Heart right ventricle (tissue), 16 donors: ENCODE measurements at regions of chr4 and their contacts with region 1.

Region 1: GRCh38 chr4:38062088-38062893 is 102.1 kb downstream of the PTTG2 start:
- DNase-seq: peak; percentile 74 to 87
- ATAC-seq: peak; percentile 52 to 89 (median 79)
- H3K4me3 ChIP-seq: peak overlapping the region in 8 of 10 donors; percentile 21 to 54 (median 42)
- H3K27ac ChIP-seq: peak overlapping the region in 9 of 10 donors; percentile 18 to 81 (median 75)
- H3K4me1 ChIP-seq: peaks cover 0 to 46% (median 26%) of the 10 kb centered on the region in 9 donors
- H3K27me3 ChIP-seq: no peaks in the 10 kb centered on the region
- CTCF ChIP-seq: peak; percentile 74 to 95 (median 87)

Region 2: GRCh38 chr4:37628977-37629609 is 433.2 kb before region 1 on chr4:
- intact Hi-C with region 1: no loop called
- DNase-seq: no peak
- ATAC-seq: peak in 5 of 8 donors; percentile 37 to 83 (median 43)
- H3K4me3 ChIP-seq: no peak overlapping the region
- H3K27ac ChIP-seq: peak overlapping the region in 1 of 10 donors; percentile 29
- H3K4me1 ChIP-seq: peaks cover 0 to 30% (median 6%) of the 10 kb centered on the region in 9 donors
- H3K27me3 ChIP-seq: no peaks in the 10 kb centered on the region
- CTCF ChIP-seq: no peak

Region 3: DNA sequence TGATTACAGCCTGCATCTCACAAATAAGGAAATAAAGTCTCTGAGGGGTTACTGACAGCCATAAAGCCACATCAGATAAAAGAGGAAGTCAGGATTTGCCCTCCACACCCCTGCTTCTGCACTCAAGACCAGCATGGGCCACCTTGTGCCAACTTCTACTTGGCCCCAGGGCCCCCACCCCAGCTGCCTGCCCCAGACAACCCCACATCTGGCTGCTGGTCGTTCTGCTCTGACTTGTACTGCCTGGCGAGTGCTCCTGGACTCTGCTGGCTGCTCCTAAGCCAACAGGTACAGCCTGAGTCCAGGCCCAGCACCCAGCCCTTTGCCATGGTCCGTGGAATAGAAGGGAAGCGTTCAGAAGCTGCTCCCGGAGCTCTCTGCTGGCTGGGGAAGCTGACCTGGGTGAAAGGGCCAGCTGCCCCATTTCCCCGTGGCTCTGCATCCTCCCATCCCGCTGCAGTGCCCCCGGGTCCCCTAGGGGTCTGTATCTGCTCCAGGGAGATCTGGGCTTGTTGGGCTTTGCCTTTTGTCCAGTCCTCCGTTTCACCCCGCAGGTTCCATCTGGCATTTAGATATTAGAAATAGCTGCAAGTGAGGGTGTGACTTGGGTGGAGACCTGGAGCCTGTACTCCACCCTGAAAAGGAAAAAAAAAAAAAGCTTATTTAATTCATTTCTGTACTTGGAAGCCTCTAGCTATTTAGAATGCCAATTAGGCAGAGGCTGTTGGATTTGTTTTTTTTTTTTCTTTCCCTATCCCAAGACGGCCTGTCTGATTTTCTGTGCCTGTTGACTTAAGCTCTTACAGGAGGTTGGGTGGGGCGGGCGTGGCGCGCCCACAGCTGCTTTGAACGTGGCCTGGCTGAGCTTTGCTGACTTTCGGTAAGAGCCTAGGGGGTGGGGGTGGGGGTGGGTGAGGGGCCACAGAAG is 92.7 kb after region 1 on chr4:
- intact Hi-C with region 1: loop called in 1 of 10 experiments (anchors 5 kb)
- DNase-seq: peak; percentile 36 to 60
- ATAC-seq: peak; percentile 71 to 84 (median 80)
- H3K4me3 ChIP-seq: peak overlapping the region in 3 of 10 donors; percentile 3 to 12 (median 7)
- H3K27ac ChIP-seq: peak overlapping the region; percentile 61 to 81 (median 72)
- H3K4me1 ChIP-seq: peaks cover 6 to 67% (median 31%) of the 10 kb centered on the region in 9 donors
- H3K27me3 ChIP-seq: no peaks in the 10 kb centered on the region
- CTCF ChIP-seq: no peak

Region 4: GRCh38 chr4:38174801-38175200 is 112.5 kb after region 1 on chr4:
- intact Hi-C with region 1: loop called (anchors 2 to 10 kb)
- DNase-seq: peak in 1 of 2 donors; percentile 28
- ATAC-seq: peak in 7 of 8 donors; percentile 32 to 57 (median 55)
- H3K4me3 ChIP-seq: no peak overlapping the region
- H3K27ac ChIP-seq: peak overlapping the region in 2 of 10 donors; percentile 12 to 79
- H3K4me1 ChIP-seq: peaks cover 2 to 68% (median 21%) of the 10 kb centered on the region in 9 donors
- H3K27me3 ChIP-seq: no peaks in the 10 kb centered on the region
- CTCF ChIP-seq: no peak

Region 5: DNA sequence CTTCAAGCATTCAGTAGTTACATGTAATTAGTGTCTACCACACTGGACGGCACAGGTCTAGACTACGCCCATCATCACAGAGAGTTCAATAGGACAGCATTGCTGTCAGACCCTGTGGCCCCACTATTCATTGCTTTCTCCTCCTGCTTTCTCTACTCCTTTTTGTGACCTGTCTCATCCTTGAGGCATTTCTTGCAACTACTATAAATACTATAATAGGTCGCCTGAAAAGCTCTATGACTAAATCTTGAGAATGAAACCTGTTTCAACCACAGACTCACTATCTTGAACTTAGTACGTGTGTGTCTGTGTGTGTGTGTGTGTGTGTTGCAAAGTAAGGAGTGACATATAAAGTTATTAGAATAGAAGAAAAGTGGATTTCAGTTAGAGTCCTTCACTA is 348.8 kb after region 1 on chr4:
- intact Hi-C with region 1: no loop called
- DNase-seq: no peak
- ATAC-seq: no peak
- H3K4me3 ChIP-seq: no peak overlapping the region
- H3K27ac ChIP-seq: no peak overlapping the region
- H3K4me1 ChIP-seq: peaks cover 0 to 18% (median 0%) of the 10 kb centered on the region in 9 donors
- H3K27me3 ChIP-seq: no peaks in the 10 kb centered on the region
- CTCF ChIP-seq: no peak

Region 6: GRCh38 chr4:38730830-38731646 is 668.7 kb after region 1 on chr4:
- intact Hi-C with region 1: loop called in 9 of 10 experiments (anchors 2 to 5 kb)
- DNase-seq: peak; percentile 85 to 86
- ATAC-seq: peak; percentile 81 to 93 (median 88)
- H3K4me3 ChIP-seq: no peak overlapping the region
- H3K27ac ChIP-seq: no peak overlapping the region
- H3K4me1 ChIP-seq: peaks cover 0 to 18% (median 4%) of the 10 kb centered on the region in 9 donors
- H3K27me3 ChIP-seq: no peaks in the 10 kb centered on the region
- CTCF ChIP-seq: peak; percentile 91 to 99 (median 97)

Region 7: GRCh38 chr4:38782452-38783108 is 720.3 kb after region 1 on chr4 and contains the start of gene TLR10:
- intact Hi-C with region 1: loop called in 1 of 10 experiments (anchors 10 kb)
- DNase-seq: peak in 1 of 2 donors; percentile 48
- ATAC-seq: peak in 6 of 8 donors; percentile 37 to 67 (median 59)
- H3K4me3 ChIP-seq: no peak within 1 kb of the TSS
- H3K27ac ChIP-seq: no peak within 1 kb of the TSS
- H3K4me1 ChIP-seq: peaks cover 0 to 32% (median 0%) of the 10 kb centered on the region in 9 donors
- H3K27me3 ChIP-seq: no peaks in the 10 kb centered on the region
- CTCF ChIP-seq: peak; percentile 64 to 80 (median 74)
- total RNA-seq, gene TLR10: 0.06 to 0.39 (median 0.11) TPM in 4 of 10 donors, not detected in the others